IMR-90 (cell line): ENCODE measurements at regions of chr9 and their contacts with region 1.

Region 1: GRCh38 chr9:101530077-101530711 is 3.5 kb upstream of the RNF20 start:
- DNase-seq: peak; percentile 82
- ATAC-seq: peak; percentile 48
- H3K4me3 ChIP-seq: no peak overlapping the region
- H3K27ac ChIP-seq: no peak overlapping the region
- H3K4me1 ChIP-seq: no peaks in the 10 kb centered on the region; the same call in 1 of the 2 replicates
- H3K27me3 ChIP-seq: no peaks in the 10 kb centered on the region
- CTCF ChIP-seq: peak; percentile 90
- POLR2A ChIP-seq: no peak
- RAD21 ChIP-seq: peak; percentile 87

Region 2: GRCh38 chr9:101398068-101398929 is 131.9 kb before region 1 on chr9 and contains the starts of genes MRPL50 and ZNF189:
- CTCF ChIA-PET with region 1: no interaction called
- POLR2A ChIA-PET with region 1: no interaction called
- dilution Hi-C with region 1: no loop called
- in situ Hi-C with region 1: no loop called
- intact Hi-C with region 1: loop called (anchors 5 kb)
- DNase-seq: peak; percentile 99
- ATAC-seq: peak; percentile 98
- H3K4me3 ChIP-seq: peak within 1 kb of the TSS; percentile 78
- H3K27ac ChIP-seq: peak within 1 kb of the TSS; percentile 83
- H3K4me1 ChIP-seq: peaks cover 2% of the 10 kb centered on the region
- H3K27me3 ChIP-seq: no peaks in the 10 kb centered on the region
- CTCF ChIP-seq: no peak
- POLR2A ChIP-seq: peak; percentile 95
- RAD21 ChIP-seq: no peak
- total RNA-seq, gene MRPL50: 8.6 and 11.1 TPM in 2 replicates
- total RNA-seq, gene ZNF189: 19.9 and 21.4 TPM in 2 replicates

Region 3: GRCh38 chr9:101458955-101459631 is 71.1 kb before region 1 on chr9:
- CTCF ChIA-PET with region 1: interaction called, 27 read pairs
- POLR2A ChIA-PET with region 1: no interaction called
- dilution Hi-C with region 1: no loop called
- in situ Hi-C with region 1: loop called (anchors 5 kb)
- intact Hi-C with region 1: loop called (anchors 1 kb)
- DNase-seq: peak; percentile 83
- ATAC-seq: peak; percentile 90
- H3K4me3 ChIP-seq: no peak overlapping the region
- H3K27ac ChIP-seq: no peak overlapping the region
- H3K4me1 ChIP-seq: peaks cover 5% of the 10 kb centered on the region; the same call in 1 of the 2 replicates
- H3K27me3 ChIP-seq: no peaks in the 10 kb centered on the region
- CTCF ChIP-seq: peak; percentile 93
- POLR2A ChIP-seq: peak; percentile 49; the same call in 1 of the 2 replicates
- RAD21 ChIP-seq: peak; percentile 93

Region 4: GRCh38 chr9:101465392-101465791 is 64.8 kb before region 1 on chr9:
- CTCF ChIA-PET with region 1: interaction called, 15 read pairs
- POLR2A ChIA-PET with region 1: interaction called, 3 read pairs
- dilution Hi-C with region 1: no loop called
- in situ Hi-C with region 1: no loop called
- intact Hi-C with region 1: loop called (anchors 1 kb)
- DNase-seq: peak; percentile 70
- ATAC-seq: peak; percentile 48; the same call in 1 of the 2 replicates
- H3K4me3 ChIP-seq: no peak overlapping the region
- H3K27ac ChIP-seq: no peak overlapping the region
- H3K4me1 ChIP-seq: no peaks in the 10 kb centered on the region
- H3K27me3 ChIP-seq: no peaks in the 10 kb centered on the region
- CTCF ChIP-seq: peak; percentile 53
- POLR2A ChIP-seq: no peak
- RAD21 ChIP-seq: peak; percentile 49

Region 5: DNA sequence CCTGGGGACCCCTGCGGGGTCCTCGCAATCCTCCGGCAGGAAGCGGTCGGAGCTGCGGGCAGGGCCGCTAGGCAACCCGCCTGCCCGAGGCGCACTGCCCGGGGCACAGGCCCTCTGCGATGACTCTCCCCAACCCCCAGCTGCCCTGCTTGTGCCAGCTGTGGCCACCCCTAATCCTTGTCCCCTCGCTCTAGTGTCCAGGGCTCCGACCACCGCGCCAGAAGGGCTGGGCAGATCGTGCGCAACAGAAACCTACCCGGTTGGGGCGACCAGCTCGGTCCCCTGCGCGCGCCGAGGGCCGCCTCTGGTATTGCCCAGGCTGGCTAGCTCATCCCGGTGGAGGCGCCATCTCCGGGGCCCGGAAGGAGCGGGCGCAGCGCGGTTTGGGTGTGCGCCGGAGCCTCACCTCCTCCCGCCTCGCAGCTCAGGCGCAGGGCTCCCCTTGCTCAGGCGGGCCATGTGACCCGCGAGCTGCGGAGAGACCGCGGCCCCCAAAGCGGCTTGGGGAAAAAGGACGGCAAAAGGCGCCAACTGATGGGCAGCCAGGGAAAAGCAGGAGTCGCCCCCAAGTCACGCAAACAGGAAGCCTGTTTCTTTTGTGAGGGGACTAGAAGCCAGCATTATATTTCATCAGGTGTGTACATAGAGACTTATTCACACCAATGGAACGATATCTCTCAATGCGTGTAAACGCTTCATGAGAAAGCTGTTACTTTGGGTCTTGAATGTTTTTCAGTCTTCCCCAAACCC is 43.3 kb before region 1 on chr9:
- CTCF ChIA-PET with region 1: interaction called, 4 read pairs
- POLR2A ChIA-PET with region 1: no interaction called
- dilution Hi-C with region 1: no loop called
- in situ Hi-C with region 1: no loop called
- intact Hi-C with region 1: loop called (anchors 5 kb)
- DNase-seq: peak; percentile 54
- ATAC-seq: peak; percentile 85
- H3K4me3 ChIP-seq: peak overlapping the region; percentile 80
- H3K27ac ChIP-seq: peak overlapping the region; percentile 75
- H3K4me1 ChIP-seq: peaks cover 1% of the 10 kb centered on the region; the same call in 1 of the 2 replicates
- H3K27me3 ChIP-seq: no peaks in the 10 kb centered on the region
- CTCF ChIP-seq: peak; percentile 26; the same call in 1 of the 2 replicates
- POLR2A ChIP-seq: 0 out of 2 replicates have a peak, but pooled peaks have one; percentile 33
- RAD21 ChIP-seq: no peak; the same call in 1 of the 2 replicates